ENCODE measurements at regions of chr5 and their contacts with region 1.

Region 1: DNA sequence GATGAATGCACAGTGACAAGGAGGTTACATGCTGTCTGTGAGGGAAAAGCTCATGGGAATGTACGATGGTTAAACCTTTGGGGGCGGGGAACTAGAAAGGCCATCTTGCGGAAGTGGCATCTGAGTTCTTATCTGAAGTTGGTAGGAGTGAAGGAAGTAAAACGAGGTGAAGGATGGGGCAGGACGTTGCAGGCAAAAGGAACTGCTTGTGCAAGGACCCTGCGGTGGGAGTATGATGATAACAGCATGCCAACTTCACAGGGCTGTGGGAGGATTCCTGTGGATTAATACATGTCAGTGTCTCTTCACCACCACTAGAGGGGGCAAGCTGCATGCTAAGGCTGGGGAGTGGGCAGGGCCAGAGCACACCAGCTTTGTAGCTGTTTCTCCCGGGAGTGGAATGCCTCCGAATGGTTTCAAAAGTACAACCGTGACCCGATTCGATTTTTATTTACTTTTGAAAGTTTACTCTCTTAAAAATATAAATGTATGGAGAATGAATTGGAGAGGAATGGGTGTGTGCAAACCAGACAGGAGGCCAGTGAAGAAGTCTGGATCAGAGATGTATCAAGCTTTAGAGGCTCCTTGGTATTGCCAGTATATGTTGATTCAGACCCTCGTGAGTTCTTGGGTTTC is 62.5 kb downstream of the CYFIP2 start:
- DNase-seq: peak; percentile 47 to 88
- H3K4me3 ChIP-seq: no peak overlapping the region
- CTCF ChIP-seq: peak in 1 of 3 donors; percentile 44
- POLR2A ChIP-seq: no peak

Region 2: GRCh38 chr5:157476702-157477408 is 148.5 kb after region 1 on chr5:
- intact Hi-C with region 1: loop called (anchors 10 kb)
- DNase-seq: peak in 1 of 2 donors; percentile 37
- H3K4me3 ChIP-seq: no peak overlapping the region
- CTCF ChIP-seq: no peak
- POLR2A ChIP-seq: no peak

Region 3: DNA sequence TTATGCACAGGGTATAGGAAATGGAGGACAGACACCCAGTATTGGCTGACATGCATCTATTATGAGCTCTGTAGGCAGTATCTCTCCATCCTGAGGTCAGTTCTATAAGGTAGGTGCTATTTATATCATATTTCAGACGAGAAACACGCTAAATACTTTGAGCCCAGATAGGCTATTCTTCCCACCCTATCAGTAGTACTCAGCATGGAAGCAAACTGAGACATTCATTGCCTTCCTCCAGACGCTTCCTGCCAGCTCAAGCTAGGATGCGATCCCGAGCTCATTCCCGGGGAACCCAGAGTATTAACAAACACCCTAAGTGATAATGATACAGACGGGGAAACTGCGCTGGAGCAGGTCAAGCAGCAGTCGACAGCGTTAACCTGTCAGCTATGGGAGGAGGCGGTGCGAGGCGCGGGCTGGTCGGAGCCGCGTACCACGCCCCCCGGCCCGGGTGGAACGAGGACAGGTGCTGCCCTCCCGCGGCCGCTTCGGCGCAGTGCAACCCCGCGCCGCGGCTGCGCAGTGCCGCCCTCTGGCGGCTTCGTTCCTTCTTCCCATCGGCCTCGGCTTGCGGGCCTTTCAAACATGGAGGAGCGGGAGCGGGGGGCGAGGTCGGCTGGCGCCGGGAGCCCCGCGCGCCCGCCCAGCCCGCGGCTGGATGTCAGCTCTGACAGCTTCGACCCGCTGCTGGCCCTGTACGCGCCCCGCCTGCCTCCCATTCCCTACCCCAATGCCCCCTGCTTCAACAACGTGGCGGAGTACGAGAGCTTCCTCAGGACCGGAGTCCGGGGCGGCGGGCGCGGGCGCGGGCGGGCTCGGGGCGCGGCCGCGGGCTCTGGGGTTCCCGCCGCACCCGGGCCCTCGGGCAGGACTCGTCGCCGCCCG is 415.0 kb after region 1 on chr5 and contains the start of gene LSM11:
- intact Hi-C with region 1: loop called (anchors 10 kb)
- DNase-seq: peak; percentile 85 to 97
- H3K4me3 ChIP-seq: peak within 1 kb of the TSS; percentile 69
- CTCF ChIP-seq: peak in 1 of 3 donors; percentile 86
- POLR2A ChIP-seq: no peak
- total RNA-seq, gene LSM11: 3.6 to 5.6 (median 3.8) TPM

Measured in lower leg skin (tissue), 4 donors.